ENCODE measurements at regions of chr5 and their contacts with region 1.

Region 1: DNA sequence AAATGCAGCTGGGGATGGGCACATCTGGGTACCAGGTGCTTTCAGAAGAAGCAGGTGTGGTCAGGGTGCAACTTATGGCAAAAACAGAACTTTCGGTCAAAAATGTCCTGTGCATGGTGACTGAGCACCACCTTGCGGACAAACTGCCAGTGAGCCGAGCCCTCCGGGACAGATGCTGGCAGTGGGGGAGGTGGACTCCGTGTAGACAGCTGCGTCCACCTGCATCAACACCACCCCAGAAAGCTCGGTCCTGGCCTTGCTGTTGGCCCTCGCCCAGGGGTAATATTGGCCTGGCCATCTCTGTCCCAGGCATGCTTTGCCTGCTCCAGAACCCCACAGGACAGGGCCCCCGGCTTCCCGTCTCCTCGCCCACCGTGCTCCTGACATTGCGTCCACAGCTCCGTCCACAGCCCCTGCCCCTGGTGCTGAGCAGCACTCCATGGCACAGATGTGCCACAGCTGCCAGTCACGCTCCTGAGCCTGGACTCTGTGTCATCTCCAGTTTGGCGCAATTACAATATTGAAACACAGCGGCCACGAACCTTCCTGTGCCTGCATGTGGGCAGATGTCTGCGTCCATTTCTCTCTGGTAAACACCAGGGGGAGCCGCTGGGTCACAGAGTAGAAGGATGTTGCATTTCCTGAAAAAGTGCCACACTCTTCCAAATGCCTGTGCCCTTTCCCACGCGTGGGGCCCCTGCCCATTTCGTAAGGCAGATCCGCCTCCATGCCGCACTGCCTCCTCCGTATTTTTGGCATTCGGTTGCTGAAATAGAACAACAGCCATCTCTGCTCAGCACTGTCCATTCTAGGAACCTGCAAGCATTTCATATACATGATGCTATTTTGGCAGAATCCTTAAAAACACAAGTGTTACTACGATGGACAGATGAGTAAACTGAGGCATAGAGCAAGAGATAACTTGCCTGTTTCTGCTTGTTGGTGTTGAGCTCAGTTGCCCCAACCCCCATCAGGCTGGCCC is 33.4 kb upstream of the SLC6A19 start:
- DNase-seq: peak; percentile 57
- ATAC-seq: peak; percentile 95
- H3K4me3 ChIP-seq: peak overlapping the region; percentile 42 to 47
- H3K27ac ChIP-seq: no peak overlapping the region
- H3K4me1 ChIP-seq: peaks cover 0 to 10% of the 10 kb centered on the region in 2 experiments; a peak in 2 of 4 replicates
- H3K27me3 ChIP-seq: no peaks in the 10 kb centered on the region
- CTCF ChIP-seq: peak; percentile 64 to 89 (median 87)
- POLR2A ChIP-seq: no peak
- RAD21 ChIP-seq: peak; percentile 95

Region 2: GRCh38 chr5:671459-672328 is 496.3 kb before region 1 on chr5:
- CTCF ChIA-PET with region 1: no interaction called
- POLR2A ChIA-PET with region 1: no interaction called
- RAD21 ChIA-PET with region 1: no interaction called
- intact Hi-C with region 1: loop called (anchors 10 kb)
- DNase-seq: no peak
- ATAC-seq: peak; percentile 77
- H3K4me3 ChIP-seq: no peak overlapping the region
- H3K27ac ChIP-seq: no peak overlapping the region
- H3K4me1 ChIP-seq: peaks cover 0 to 33% of the 10 kb centered on the region in 2 experiments; a peak in 2 of 4 replicates
- H3K27me3 ChIP-seq: no peaks in the 10 kb centered on the region
- CTCF ChIP-seq: peak; percentile 86 to 93 (median 92)
- POLR2A ChIP-seq: no peak
- RAD21 ChIP-seq: peak; percentile 95

Region 3: DNA sequence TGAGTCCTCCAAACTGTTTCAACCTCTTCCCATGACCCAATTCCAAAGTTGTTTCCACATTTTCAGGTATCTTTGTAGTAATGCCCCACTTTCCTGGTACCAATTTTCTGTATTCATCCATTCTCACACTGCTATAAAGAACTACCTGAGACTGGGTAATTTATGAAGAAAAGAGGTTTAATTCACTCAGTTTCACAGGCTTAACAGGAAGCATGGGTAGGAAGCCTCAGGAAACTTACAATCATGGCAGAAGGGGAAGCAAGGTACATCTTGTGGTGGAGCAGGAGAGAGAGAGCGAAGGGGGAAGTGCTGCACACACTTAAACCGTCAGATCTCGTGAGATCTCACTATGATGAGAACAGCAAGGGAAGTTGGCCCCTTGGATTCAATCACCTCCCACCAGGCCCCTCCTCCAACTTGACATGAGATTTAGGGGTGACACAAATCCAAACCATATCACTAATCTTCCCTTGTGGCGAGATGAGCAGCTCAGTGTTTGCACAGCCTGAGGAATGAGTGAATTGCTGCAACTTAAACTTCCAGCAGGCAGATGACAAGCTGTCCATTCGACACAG is 232.4 kb before region 1 on chr5:
- CTCF ChIA-PET with region 1: interaction called, 26 read pairs
- POLR2A ChIA-PET with region 1: no interaction called
- RAD21 ChIA-PET with region 1: interaction called in 1 of 2 experiments, 5 read pairs
- intact Hi-C with region 1: no loop called
- DNase-seq: no peak
- ATAC-seq: no peak
- H3K4me3 ChIP-seq: no peak overlapping the region
- H3K27ac ChIP-seq: no peak overlapping the region
- H3K4me1 ChIP-seq: no peaks in the 10 kb centered on the region
- H3K27me3 ChIP-seq: peaks cover 15% of the 10 kb centered on the region; the same call in 1 of the 2 replicates
- CTCF ChIP-seq: no peak
- POLR2A ChIP-seq: no peak
- RAD21 ChIP-seq: no peak

Region 4: GRCh38 chr5:1244976-1245375 is 77.0 kb after region 1 on chr5:
- CTCF ChIA-PET with region 1: no interaction called
- POLR2A ChIA-PET with region 1: no interaction called
- RAD21 ChIA-PET with region 1: no interaction called
- intact Hi-C with region 1: loop called (anchors 1 kb)
- DNase-seq: no peak
- ATAC-seq: peak; percentile 44
- H3K4me3 ChIP-seq: no peak overlapping the region
- H3K27ac ChIP-seq: no peak overlapping the region
- H3K4me1 ChIP-seq: no peaks in the 10 kb centered on the region
- H3K27me3 ChIP-seq: no peaks in the 10 kb centered on the region
- CTCF ChIP-seq: peak; percentile 9 to 31 (median 14); a peak in 1 of 6 replicates
- POLR2A ChIP-seq: no peak
- RAD21 ChIP-seq: peak; percentile 51

Region 5: DNA sequence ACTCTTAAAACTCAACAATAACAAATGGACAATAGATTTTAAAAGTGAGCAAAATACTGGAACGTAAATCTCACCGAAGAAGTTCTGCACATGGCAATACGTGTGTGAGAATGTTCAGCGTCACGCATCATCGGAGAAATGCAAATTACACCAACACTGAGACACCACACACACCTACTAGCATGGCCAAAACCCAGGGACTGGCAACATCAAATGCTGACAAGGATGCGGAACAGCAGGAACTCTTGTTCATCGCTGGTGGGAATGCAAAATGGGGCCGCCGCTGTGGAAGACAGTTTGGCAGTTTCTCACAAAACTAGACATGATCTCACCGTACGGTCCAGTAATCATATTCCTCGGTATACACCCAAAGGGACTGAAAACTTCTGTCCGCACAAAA is 198.5 kb after region 1 on chr5:
- CTCF ChIA-PET with region 1: no interaction called
- POLR2A ChIA-PET with region 1: no interaction called
- RAD21 ChIA-PET with region 1: no interaction called
- intact Hi-C with region 1: no loop called
- DNase-seq: no peak
- ATAC-seq: no peak
- H3K4me3 ChIP-seq: no peak overlapping the region
- H3K27ac ChIP-seq: no peak overlapping the region
- H3K4me1 ChIP-seq: no peaks in the 10 kb centered on the region
- H3K27me3 ChIP-seq: peaks cover 43% of the 10 kb centered on the region; the same call in 1 of the 2 replicates
- CTCF ChIP-seq: no peak
- POLR2A ChIP-seq: no peak
- RAD21 ChIP-seq: no peak

Region 6: DNA sequence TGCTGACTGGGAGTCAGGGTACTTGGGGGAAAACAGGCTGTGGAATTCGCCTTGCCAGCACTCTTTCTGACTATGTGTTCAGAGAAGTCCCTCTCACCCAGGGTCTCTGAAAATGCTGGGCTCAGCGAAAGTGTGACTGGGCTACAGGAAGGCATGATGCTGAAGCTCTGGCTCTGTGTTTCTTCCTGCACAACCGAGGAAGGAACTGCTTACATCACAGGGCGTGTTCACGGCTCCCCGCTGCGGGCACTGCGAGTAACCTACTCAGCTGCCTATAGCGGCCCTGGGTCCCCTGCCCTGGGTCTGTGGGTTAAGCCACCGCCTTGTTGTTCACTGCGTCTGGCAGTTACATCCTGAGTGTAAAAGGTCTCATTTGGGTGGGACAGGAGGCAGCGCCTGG is 937.1 kb after region 1 on chr5:
- CTCF ChIA-PET with region 1: no interaction called
- POLR2A ChIA-PET with region 1: no interaction called
- RAD21 ChIA-PET with region 1: no interaction called
- intact Hi-C with region 1: no loop called
- DNase-seq: no peak
- ATAC-seq: no peak
- H3K4me3 ChIP-seq: no peak overlapping the region
- H3K27ac ChIP-seq: no peak overlapping the region
- H3K4me1 ChIP-seq: no peaks in the 10 kb centered on the region
- H3K27me3 ChIP-seq: peaks cover 37% of the 10 kb centered on the region
- CTCF ChIP-seq: no peak
- POLR2A ChIP-seq: no peak
- RAD21 ChIP-seq: no peak